Endothelial cell of umbilical vein (primary cell): ENCODE measurements at regions of chr18 and their contacts with region 1.

Region 1: GRCh38 chr18:23852208-23853045 is 162.1 kb upstream of the TTC39C start:
- DNase-seq: no peak
- H3K4me3 ChIP-seq: no peak overlapping the region
- H3K27ac ChIP-seq: no peak overlapping the region
- H3K4me1 ChIP-seq: peaks cover 25% of the 10 kb centered on the region
- H3K27me3 ChIP-seq: no peaks in the 10 kb centered on the region
- CTCF ChIP-seq: no peak
- POLR2A ChIP-seq: no peak

Region 2: DNA sequence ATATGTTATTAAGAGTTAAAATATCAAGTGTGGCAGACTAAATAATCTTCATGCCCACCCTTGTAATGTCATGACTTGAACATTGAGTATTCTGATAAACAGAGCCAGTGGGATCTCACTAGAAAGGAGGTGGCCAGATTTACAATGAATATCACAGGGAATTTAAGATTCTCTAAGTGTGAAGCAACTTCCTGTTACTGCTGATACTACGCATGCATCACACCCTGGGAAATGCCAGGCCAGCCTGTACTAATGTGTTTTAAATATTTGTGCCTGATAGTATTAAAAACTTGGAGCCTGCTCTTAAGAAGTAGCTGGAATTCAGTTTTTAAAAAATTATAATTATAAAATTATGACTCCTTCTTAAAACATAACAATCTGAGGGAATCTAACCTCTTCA is 14.8 kb before region 1 on chr18:
- CTCF ChIA-PET with region 1: interaction called, 9 read pairs
- POLR2A ChIA-PET with region 1: no interaction called
- dilution Hi-C with region 1: no loop called
- intact Hi-C with region 1: loop called (anchors 1 kb)
- DNase-seq: peak; percentile 82
- H3K4me3 ChIP-seq: no peak overlapping the region
- H3K27ac ChIP-seq: peak overlapping the region; percentile 67
- H3K4me1 ChIP-seq: peaks cover 7% of the 10 kb centered on the region
- H3K27me3 ChIP-seq: no peaks in the 10 kb centered on the region
- CTCF ChIP-seq: no peak
- POLR2A ChIP-seq: no peak

Region 3: GRCh38 chr18:23900994-23901393 is 48.6 kb after region 1 on chr18:
- CTCF ChIA-PET with region 1: no interaction called
- POLR2A ChIA-PET with region 1: no interaction called
- dilution Hi-C with region 1: no loop called
- intact Hi-C with region 1: loop called (anchors 1 kb)
- DNase-seq: peak; percentile 94
- H3K4me3 ChIP-seq: no peak overlapping the region
- H3K27ac ChIP-seq: peak overlapping the region; percentile 52
- H3K4me1 ChIP-seq: peaks cover 11% of the 10 kb centered on the region
- H3K27me3 ChIP-seq: no peaks in the 10 kb centered on the region
- CTCF ChIP-seq: no peak
- POLR2A ChIP-seq: no peak

Region 4: GRCh38 chr18:23912356-23912755 is 59.9 kb after region 1 on chr18:
- CTCF ChIA-PET with region 1: no interaction called
- POLR2A ChIA-PET with region 1: no interaction called
- dilution Hi-C with region 1: no loop called
- intact Hi-C with region 1: loop called (anchors 1 kb)
- DNase-seq: peak; percentile 83
- H3K4me3 ChIP-seq: no peak overlapping the region
- H3K27ac ChIP-seq: peak overlapping the region; percentile 25
- H3K4me1 ChIP-seq: peaks cover 7% of the 10 kb centered on the region
- H3K27me3 ChIP-seq: no peaks in the 10 kb centered on the region
- CTCF ChIP-seq: no peak
- POLR2A ChIP-seq: peak; percentile 41

Region 5: DNA sequence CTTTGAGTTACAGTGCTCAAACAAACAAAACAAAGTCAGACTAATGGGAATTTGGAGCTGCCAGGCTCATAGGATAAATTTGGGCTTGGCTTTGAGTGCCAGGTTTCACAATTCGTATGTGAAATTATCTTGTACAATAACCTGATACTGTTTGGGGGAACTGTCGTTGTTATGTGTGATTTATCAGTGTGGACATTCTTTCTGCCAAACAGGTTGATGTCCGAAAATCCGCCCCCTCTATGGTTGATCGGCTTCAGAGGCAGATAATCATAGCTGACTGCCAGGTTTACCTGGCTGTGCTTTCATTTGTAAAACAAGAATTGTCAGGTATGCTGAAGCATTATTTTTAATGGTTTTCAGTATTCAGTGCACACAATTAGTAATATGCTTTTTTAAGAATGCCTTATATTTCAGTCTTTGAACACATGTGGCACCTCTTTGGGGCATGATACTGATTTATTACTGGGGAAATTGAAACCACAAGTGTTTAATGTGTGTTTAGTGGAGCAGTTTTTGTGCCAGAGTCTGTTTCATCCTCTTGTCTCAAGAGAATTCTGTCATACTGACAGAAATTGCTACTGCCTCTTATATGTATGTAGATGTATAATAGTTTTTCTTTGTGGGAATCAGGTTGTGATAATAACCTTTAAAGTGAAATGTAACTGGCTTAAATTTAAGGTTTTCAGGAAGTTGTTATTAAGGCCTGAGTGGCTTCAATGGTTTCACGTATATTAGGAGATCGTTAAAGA is 216.7 kb after region 1 on chr18:
- CTCF ChIA-PET with region 1: no interaction called
- POLR2A ChIA-PET with region 1: no interaction called
- dilution Hi-C with region 1: no loop called
- intact Hi-C with region 1: no loop called
- DNase-seq: no peak
- H3K4me3 ChIP-seq: no peak overlapping the region
- H3K27ac ChIP-seq: no peak overlapping the region
- H3K4me1 ChIP-seq: no peaks in the 10 kb centered on the region
- H3K27me3 ChIP-seq: no peaks in the 10 kb centered on the region
- CTCF ChIP-seq: no peak
- POLR2A ChIP-seq: no peak